GM12878 (cell line): ENCODE measurements at regions of chr3 and their contacts with region 1.

Region 1: DNA sequence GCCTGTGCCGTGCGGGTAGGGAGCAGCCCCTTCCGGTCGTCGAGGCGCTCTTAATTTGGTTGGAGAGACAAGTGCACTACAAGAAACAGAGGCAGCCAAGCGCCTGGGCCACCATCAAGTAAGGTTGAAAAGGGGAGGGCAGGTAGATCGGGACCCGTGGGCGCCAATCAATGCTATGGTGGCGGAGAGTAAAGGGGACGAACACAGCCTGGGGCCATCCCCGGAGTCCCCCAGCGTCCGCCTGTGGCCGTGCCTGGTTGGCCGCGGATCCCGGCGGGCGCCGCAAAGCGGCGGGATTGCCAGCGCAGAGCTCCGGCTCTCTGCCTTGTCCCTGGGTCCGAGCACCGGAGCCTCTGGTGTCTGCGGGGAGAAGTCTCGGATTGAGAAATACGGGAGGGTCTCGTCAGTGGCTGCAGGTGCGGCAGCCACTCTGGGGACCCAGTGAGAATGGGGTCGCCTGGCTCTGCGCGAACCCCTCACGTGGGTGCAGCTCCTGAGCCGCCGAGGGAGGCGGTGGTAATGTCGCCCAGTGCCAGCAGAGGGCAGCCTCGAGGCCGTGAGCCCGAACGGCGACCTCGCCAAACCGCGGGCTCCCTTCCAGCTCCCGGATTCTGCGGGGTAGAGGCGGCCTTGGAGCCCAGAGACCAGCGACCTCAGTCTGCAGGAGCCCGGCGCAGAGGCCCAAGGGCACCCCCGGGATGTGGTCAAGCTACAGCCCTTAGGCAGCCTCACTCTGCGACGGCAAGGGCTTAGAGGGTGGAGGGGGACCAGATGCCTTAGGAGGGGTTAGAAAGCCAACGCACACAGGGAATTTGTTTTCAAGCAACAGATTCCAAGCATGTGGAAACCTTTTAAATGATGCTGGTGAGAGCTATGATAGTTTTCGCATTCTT is 10.8 kb downstream of the FOXL2 start:
- DNase-seq: no peak
- ATAC-seq: peak; percentile 89
- H3K4me3 ChIP-seq: no peak overlapping the region; the same call in 1 of the 2 replicates
- H3K27ac ChIP-seq: no peak overlapping the region
- H3K4me1 ChIP-seq: no peaks in the 10 kb centered on the region
- H3K27me3 ChIP-seq: peaks cover 27 to 47% of the 10 kb centered on the region in 2 experiments
- CTCF ChIP-seq: peak; percentile 71 to 92 (median 82)
- EP300 ChIP-seq: no peak
- POLR2A ChIP-seq: no peak
- RAD21 ChIP-seq: peak; percentile 33; the same call in 1 of the 2 replicates

Region 2: DNA sequence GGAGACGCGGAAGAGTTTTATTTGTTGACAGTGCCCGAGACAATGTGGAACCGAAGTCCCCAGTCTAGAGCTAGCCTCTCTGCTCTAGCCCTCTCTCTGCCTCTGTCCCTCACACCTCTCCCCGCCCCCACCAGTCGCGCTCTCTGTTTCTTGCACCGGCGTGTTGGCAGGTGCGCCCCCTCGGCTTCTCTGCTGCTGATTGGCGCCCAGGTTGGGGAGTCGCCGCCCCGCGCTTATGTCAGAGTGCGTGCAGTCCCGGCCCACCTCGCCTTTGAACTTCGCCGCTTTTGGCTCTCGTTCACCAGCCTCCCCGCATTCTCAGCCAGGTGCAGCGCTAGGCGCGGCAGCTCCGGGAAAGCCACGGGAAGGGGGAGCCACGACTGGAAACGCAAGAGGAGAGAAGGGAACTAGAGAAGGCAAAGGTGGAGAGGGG is 1172.1 kb before region 1 on chr3 and contains the start of gene SOX14:
- CTCF ChIA-PET with region 1: no interaction called
- POLR2A ChIA-PET with region 1: no interaction called
- RAD21 ChIA-PET with region 1: no interaction called
- SMC1A ChIA-PET with region 1: no interaction called
- in situ Hi-C with region 1: loop called (anchors 25 kb)
- intact Hi-C with region 1: no loop called
- DNase-seq: no peak
- ATAC-seq: no peak
- H3K4me3 ChIP-seq: no peak within 1 kb of the TSS
- H3K27ac ChIP-seq: no peak within 1 kb of the TSS
- H3K4me1 ChIP-seq: no peaks in the 10 kb centered on the region
- H3K27me3 ChIP-seq: peaks cover 20 to 27% of the 10 kb centered on the region in 2 experiments
- CTCF ChIP-seq: no peak
- EP300 ChIP-seq: no peak
- POLR2A ChIP-seq: no peak
- RAD21 ChIP-seq: no peak
- polyA plus RNA-seq, gene SOX14: not detected

Region 3: GRCh38 chr3:138219255-138219654 is 716.8 kb before region 1 on chr3:
- CTCF ChIA-PET with region 1: no interaction called
- POLR2A ChIA-PET with region 1: no interaction called
- RAD21 ChIA-PET with region 1: no interaction called
- SMC1A ChIA-PET with region 1: no interaction called
- in situ Hi-C with region 1: no loop called
- intact Hi-C with region 1: no loop called
- DNase-seq: no peak
- ATAC-seq: no peak
- H3K4me3 ChIP-seq: no peak overlapping the region
- H3K27ac ChIP-seq: no peak overlapping the region
- H3K4me1 ChIP-seq: no peaks in the 10 kb centered on the region
- H3K27me3 ChIP-seq: no peaks in the 10 kb centered on the region
- CTCF ChIP-seq: no peak
- EP300 ChIP-seq: no peak
- POLR2A ChIP-seq: no peak
- RAD21 ChIP-seq: no peak

Region 4: DNA sequence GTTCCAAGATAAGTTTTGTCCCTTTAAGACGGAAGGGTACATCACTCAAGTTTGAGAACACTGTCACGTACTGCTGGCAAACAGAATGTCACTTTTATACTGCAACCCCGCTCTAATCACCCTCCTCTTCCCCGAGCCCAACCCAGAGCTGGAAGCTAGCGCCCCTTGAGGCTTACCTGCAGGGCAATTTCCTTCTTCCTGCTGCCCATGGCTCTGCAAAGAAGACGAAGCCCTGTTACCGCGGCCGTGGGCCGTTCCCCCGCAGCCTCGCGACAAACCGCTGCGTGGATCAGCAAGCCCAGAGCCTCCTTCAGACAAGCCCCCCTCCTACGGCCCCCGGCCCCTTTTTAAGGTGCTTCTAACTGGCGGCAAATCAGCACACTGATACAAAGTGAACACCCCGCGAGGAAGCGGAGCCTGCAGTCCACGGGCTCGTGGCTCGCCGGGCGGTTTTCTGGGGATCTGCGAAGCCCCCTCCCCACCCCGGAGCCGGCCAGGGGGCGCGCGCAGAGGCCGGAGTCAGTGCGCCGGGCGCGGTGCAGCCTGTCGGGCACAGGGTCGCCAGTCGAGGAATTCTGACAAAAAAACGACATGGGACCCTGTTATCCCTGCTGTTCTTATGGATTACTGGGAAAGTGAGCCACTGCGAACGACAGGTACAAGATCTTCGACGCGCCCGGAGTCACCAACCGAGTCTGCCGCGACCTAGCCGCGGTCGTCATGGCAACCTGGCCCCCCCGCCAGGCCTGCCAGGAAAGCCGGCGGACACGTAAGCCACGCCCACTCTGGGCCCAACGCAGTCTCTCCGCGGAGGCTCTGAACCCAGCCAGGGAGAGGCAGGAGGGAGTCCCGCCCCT is 606.7 kb before region 1 on chr3 and contains the start of gene NME9:
- CTCF ChIA-PET with region 1: no interaction called
- POLR2A ChIA-PET with region 1: no interaction called
- RAD21 ChIA-PET with region 1: no interaction called
- SMC1A ChIA-PET with region 1: no interaction called
- in situ Hi-C with region 1: no loop called
- intact Hi-C with region 1: no loop called
- DNase-seq: no peak
- ATAC-seq: peak; percentile 91
- H3K4me3 ChIP-seq: peak within 1 kb of the TSS; percentile 64
- H3K27ac ChIP-seq: no peak within 1 kb of the TSS
- H3K4me1 ChIP-seq: peaks cover 7% of the 10 kb centered on the region
- H3K27me3 ChIP-seq: peaks cover 2 to 18% of the 10 kb centered on the region in 2 experiments; a peak in 3 of 4 replicates
- CTCF ChIP-seq: peak; percentile 52 to 69 (median 64)
- EP300 ChIP-seq: no peak
- POLR2A ChIP-seq: no peak
- RAD21 ChIP-seq: peak; percentile 46
- polyA plus RNA-seq, gene NME9: 0.09 to 0.26 TPM

Region 5: GRCh38 chr3:138578141-138578540 is 358.0 kb before region 1 on chr3:
- CTCF ChIA-PET with region 1: no interaction called
- POLR2A ChIA-PET with region 1: no interaction called
- RAD21 ChIA-PET with region 1: no interaction called
- SMC1A ChIA-PET with region 1: no interaction called
- in situ Hi-C with region 1: no loop called
- intact Hi-C with region 1: no loop called
- DNase-seq: no peak
- ATAC-seq: peak; percentile 95
- H3K4me3 ChIP-seq: no peak overlapping the region
- H3K27ac ChIP-seq: no peak overlapping the region
- H3K4me1 ChIP-seq: peaks cover 15% of the 10 kb centered on the region
- H3K27me3 ChIP-seq: no peaks in the 10 kb centered on the region
- CTCF ChIP-seq: no peak
- EP300 ChIP-seq: peak in 1 of 2 experiments; percentile 74; a peak in 2 of 4 replicates
- POLR2A ChIP-seq: no peak
- RAD21 ChIP-seq: no peak

Region 6: DNA sequence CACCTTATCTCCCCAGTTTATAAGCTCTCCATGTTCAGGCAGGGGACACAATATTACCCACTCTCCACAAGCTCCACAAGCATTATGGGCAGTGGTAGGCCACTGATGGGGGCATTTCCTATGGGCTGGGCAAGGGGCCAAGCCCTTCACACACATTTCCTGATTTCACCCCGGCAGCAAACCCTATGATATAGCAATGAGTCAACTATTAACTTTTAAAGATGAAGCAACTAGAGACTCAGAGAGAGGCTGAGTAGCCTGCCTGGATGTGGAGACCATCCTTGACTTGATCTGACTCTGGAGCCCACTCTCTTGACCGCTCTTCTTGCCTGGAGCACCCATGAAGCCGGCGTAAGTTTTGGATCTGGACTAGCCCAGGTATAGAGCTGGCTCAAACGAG is 38.4 kb after region 1 on chr3:
- CTCF ChIA-PET with region 1: interaction called, 11 read pairs
- POLR2A ChIA-PET with region 1: no interaction called
- RAD21 ChIA-PET with region 1: no interaction called
- SMC1A ChIA-PET with region 1: no interaction called
- in situ Hi-C with region 1: no loop called
- intact Hi-C with region 1: no loop called
- DNase-seq: no peak
- ATAC-seq: no peak
- H3K4me3 ChIP-seq: no peak overlapping the region
- H3K27ac ChIP-seq: no peak overlapping the region
- H3K4me1 ChIP-seq: no peaks in the 10 kb centered on the region
- H3K27me3 ChIP-seq: no peaks in the 10 kb centered on the region
- CTCF ChIP-seq: no peak
- EP300 ChIP-seq: no peak
- POLR2A ChIP-seq: no peak
- RAD21 ChIP-seq: no peak

Region 7: GRCh38 chr3:139319428-139320402 is 383.6 kb after region 1 on chr3:
- CTCF ChIA-PET with region 1: no interaction called
- POLR2A ChIA-PET with region 1: no interaction called
- RAD21 ChIA-PET with region 1: no interaction called
- SMC1A ChIA-PET with region 1: interaction called, 3 read pairs
- in situ Hi-C with region 1: loop called (anchors 10 kb)
- intact Hi-C with region 1: no loop called
- DNase-seq: no peak
- ATAC-seq: 0 out of 3 replicates have a peak, but pooled peaks have one; percentile 36
- H3K4me3 ChIP-seq: no peak overlapping the region
- H3K27ac ChIP-seq: no peak overlapping the region
- H3K4me1 ChIP-seq: no peaks in the 10 kb centered on the region
- H3K27me3 ChIP-seq: no peaks in the 10 kb centered on the region; a peak in 1 of 4 replicates
- CTCF ChIP-seq: peak; percentile 7 to 38 (median 24); a peak in 4 of 6 replicates
- EP300 ChIP-seq: no peak
- POLR2A ChIP-seq: no peak
- RAD21 ChIP-seq: no peak

Region 8: DNA sequence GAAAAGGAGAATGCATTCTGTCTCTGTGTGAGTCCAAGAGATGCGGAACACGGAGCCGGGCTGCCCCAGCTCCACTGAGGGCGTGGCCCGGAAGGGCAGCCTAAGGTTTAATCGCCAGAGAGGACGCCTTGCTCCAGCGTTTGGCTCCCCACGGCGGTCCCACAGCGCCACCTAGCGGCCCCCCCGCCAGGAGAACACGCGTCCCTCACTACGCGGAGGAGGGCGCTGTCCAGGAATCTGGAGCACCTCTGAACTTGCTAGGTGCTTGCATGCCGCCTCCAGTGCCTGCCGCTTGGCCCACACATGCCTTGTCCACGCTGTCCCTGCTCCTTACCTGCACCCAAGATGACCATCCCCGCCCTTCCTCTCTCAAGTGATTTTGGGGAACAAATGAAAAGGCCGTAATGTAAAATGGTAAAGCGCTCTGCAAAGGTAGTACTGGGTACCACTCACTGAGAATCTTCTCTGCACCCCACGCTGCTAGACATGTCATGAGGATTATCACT is 393.3 kb after region 1 on chr3:
- CTCF ChIA-PET with region 1: interaction called, 10 read pairs
- POLR2A ChIA-PET with region 1: no interaction called
- RAD21 ChIA-PET with region 1: interaction called, 5 read pairs
- SMC1A ChIA-PET with region 1: no interaction called
- in situ Hi-C with region 1: loop called (anchors 5 kb)
- intact Hi-C with region 1: loop called (anchors 1 kb)
- DNase-seq: no peak
- ATAC-seq: peak; percentile 100
- H3K4me3 ChIP-seq: peak overlapping the region; percentile 43; the same call in 1 of the 2 replicates
- H3K27ac ChIP-seq: no peak overlapping the region
- H3K4me1 ChIP-seq: no peaks in the 10 kb centered on the region; the same call in 1 of the 2 replicates
- H3K27me3 ChIP-seq: peaks cover 0 to 1% of the 10 kb centered on the region in 2 experiments; a peak in 2 of 4 replicates
- CTCF ChIP-seq: peak; percentile 96 to 100 (median 97)
- EP300 ChIP-seq: no peak
- POLR2A ChIP-seq: no peak
- RAD21 ChIP-seq: peak; percentile 88